ENCODE measurements at regions of chr6 and their contacts with region 1.

Region 1: GRCh38 chr6:75526502-75527127 is 33.0 kb upstream of the FILIP1 start:
- DNase-seq: peak in 3 of 6 donors; percentile 23 to 77 (median 46)
- ATAC-seq: peak; percentile 89 to 97 (median 94)
- H3K4me3 ChIP-seq: no peak overlapping the region
- H3K27ac ChIP-seq: no peak overlapping the region
- H3K4me1 ChIP-seq: peaks cover 0 to 6% (median 0%) of the 10 kb centered on the region in 3 donors
- H3K27me3 ChIP-seq: no peaks in the 10 kb centered on the region
- CTCF ChIP-seq: peak in 3 of 4 donors; percentile 42 to 54 (median 49)

Region 2: GRCh38 chr6:74979055-74979766 is 547.4 kb before region 1 on chr6:
- intact Hi-C with region 1: no loop called
- DNase-seq: no peak
- ATAC-seq: no peak
- H3K4me3 ChIP-seq: no peak overlapping the region
- H3K27ac ChIP-seq: no peak overlapping the region
- H3K4me1 ChIP-seq: no peaks in the 10 kb centered on the region
- H3K27me3 ChIP-seq: no peaks in the 10 kb centered on the region
- CTCF ChIP-seq: no peak

Region 3: DNA sequence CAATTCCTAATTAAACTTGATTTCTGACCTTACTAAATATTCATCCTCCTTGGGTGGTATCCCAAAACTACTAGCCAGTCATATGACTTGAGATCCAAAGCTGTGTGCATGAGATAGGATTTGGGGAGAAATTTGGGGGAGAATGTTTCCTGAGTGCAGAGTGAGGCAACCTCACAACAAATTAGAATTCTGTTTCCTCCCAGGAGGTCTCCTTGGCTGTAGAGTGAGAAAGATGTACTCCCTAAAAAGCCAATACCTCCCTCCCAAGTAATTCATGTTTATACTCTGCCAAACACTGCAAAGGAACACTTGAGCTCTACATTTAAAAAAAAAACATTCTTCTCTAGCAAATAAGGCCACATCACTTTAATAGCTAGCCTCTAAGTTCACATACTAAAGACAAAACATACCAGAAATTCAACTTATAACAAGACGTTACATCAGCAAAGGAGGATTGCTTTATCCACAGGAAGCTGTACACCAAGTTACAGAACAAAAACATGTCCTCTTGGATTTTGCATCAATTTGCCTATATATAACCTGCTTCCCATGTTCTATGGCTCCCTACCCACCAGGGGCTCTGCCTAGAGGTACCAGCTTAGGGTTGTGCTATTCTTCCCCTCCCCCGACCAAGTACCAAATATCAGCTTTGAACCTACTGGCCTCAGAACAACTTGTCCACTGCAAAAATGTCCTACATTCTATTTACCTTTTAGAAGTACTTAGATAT is 226.6 kb before region 1 on chr6:
- intact Hi-C with region 1: loop called in 1 of 3 experiments (anchors 10 kb)
- DNase-seq: no peak
- ATAC-seq: no peak
- H3K4me3 ChIP-seq: no peak overlapping the region
- H3K27ac ChIP-seq: no peak overlapping the region
- H3K4me1 ChIP-seq: no peaks in the 10 kb centered on the region
- H3K27me3 ChIP-seq: no peaks in the 10 kb centered on the region
- CTCF ChIP-seq: no peak

Region 4: GRCh38 chr6:75368151-75368779 is 158.3 kb before region 1 on chr6:
- intact Hi-C with region 1: loop called in 1 of 3 experiments (anchors 10 kb)
- DNase-seq: peak in 3 of 6 donors; percentile 23 to 56 (median 39)
- ATAC-seq: peak; percentile 50 to 96 (median 82)
- H3K4me3 ChIP-seq: no peak overlapping the region
- H3K27ac ChIP-seq: no peak overlapping the region
- H3K4me1 ChIP-seq: no peaks in the 10 kb centered on the region
- H3K27me3 ChIP-seq: no peaks in the 10 kb centered on the region
- CTCF ChIP-seq: peak in 2 of 4 donors; percentile 9 to 25